ENCODE measurements at regions of chr10 and their contacts with region 1.

Region 1: GRCh38 chr10:22648547-22648961 is 65.8 kb downstream of the PIP4K2A start:
- DNase-seq: peak in 2 of 9 experiments; percentile 42 to 63
- ATAC-seq: no peak
- H3K4me3 ChIP-seq: peak overlapping the region; percentile 3 to 28
- H3K4me3 Mint-ChIP-seq: peak overlapping the region; percentile 81
- H3K27ac ChIP-seq: peak overlapping the region; percentile 17 to 74
- H3K27ac Mint-ChIP-seq: peak overlapping the region; percentile 91
- H3K4me1 ChIP-seq: peaks cover 98% of the 10 kb centered on the region
- H3K4me1 Mint-ChIP-seq: peaks cover 94% of the 10 kb centered on the region
- H3K27me3 ChIP-seq: no peaks in the 10 kb centered on the region
- H3K27me3 Mint-ChIP-seq: no peaks in the 10 kb centered on the region
- CTCF ChIP-seq: no peak

Region 2: GRCh38 chr10:22210277-22210676 is 438.3 kb before region 1 on chr10:
- CTCF ChIA-PET with region 1: no interaction called
- POLR2A ChIA-PET with region 1: no interaction called
- intact Hi-C with region 1: no loop called
- DNase-seq: no peak
- ATAC-seq: no peak
- H3K4me3 ChIP-seq: no peak overlapping the region
- H3K4me3 Mint-ChIP-seq: no peak overlapping the region
- H3K27ac ChIP-seq: no peak overlapping the region
- H3K27ac Mint-ChIP-seq: no peak overlapping the region
- H3K4me1 ChIP-seq: no peaks in the 10 kb centered on the region
- H3K4me1 Mint-ChIP-seq: no peaks in the 10 kb centered on the region
- H3K27me3 ChIP-seq: peaks cover 0 to 6% of the 10 kb centered on the region in 2 experiments
- H3K27me3 Mint-ChIP-seq: peaks cover 8% of the 10 kb centered on the region
- CTCF ChIP-seq: no peak

Region 3: GRCh38 chr10:22573820-22574569 is 74.6 kb before region 1 on chr10:
- CTCF ChIA-PET with region 1: interaction called, 4 read pairs
- POLR2A ChIA-PET with region 1: no interaction called
- intact Hi-C with region 1: loop called in 1 of 2 experiments (anchors 5 kb)
- DNase-seq: peak in 7 of 9 experiments; percentile 2 to 82 (median 43)
- ATAC-seq: peak; percentile 64
- H3K4me3 ChIP-seq: no peak overlapping the region
- H3K4me3 Mint-ChIP-seq: peak overlapping the region; percentile 71
- H3K27ac ChIP-seq: peak overlapping the region in 1 of 2 experiments; percentile 63
- H3K27ac Mint-ChIP-seq: peak overlapping the region; percentile 94
- H3K4me1 ChIP-seq: peaks cover 35% of the 10 kb centered on the region
- H3K4me1 Mint-ChIP-seq: peaks cover 73% of the 10 kb centered on the region
- H3K27me3 ChIP-seq: no peaks in the 10 kb centered on the region
- H3K27me3 Mint-ChIP-seq: no peaks in the 10 kb centered on the region
- CTCF ChIP-seq: peak; percentile 79

Region 4: DNA sequence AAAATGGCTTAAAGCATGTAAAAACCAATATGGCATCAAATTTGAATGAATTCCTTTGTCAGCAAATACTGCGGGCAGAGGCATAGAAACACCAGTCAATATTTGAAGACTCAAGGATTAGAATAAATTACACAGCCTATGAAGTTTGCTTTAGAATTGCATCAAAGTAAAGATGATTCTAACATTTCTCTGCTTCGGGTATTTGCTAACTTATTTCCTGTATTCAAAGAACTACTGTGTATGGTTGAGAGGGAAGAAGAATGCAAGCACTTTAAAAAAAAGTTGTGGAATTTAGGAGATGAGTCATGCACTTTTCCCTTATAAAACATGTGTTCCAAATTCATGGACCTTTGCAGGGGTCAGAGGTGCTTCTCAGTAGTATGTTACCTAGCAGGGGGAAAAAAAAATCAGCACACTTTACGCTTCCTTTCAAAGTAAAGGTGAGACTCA is 24.2 kb before region 1 on chr10:
- CTCF ChIA-PET with region 1: interaction called, 5 read pairs
- POLR2A ChIA-PET with region 1: interaction called, 10 read pairs
- intact Hi-C with region 1: loop called in 1 of 2 experiments (anchors 2 kb)
- DNase-seq: no peak
- ATAC-seq: peak; percentile 59
- H3K4me3 ChIP-seq: no peak overlapping the region
- H3K4me3 Mint-ChIP-seq: peak overlapping the region; percentile 50
- H3K27ac ChIP-seq: peak overlapping the region in 1 of 2 experiments; percentile 81
- H3K27ac Mint-ChIP-seq: peak overlapping the region; percentile 87
- H3K4me1 ChIP-seq: peaks cover 97% of the 10 kb centered on the region
- H3K4me1 Mint-ChIP-seq: peaks cover 97% of the 10 kb centered on the region
- H3K27me3 ChIP-seq: no peaks in the 10 kb centered on the region
- H3K27me3 Mint-ChIP-seq: no peaks in the 10 kb centered on the region
- CTCF ChIP-seq: no peak

Region 5: DNA sequence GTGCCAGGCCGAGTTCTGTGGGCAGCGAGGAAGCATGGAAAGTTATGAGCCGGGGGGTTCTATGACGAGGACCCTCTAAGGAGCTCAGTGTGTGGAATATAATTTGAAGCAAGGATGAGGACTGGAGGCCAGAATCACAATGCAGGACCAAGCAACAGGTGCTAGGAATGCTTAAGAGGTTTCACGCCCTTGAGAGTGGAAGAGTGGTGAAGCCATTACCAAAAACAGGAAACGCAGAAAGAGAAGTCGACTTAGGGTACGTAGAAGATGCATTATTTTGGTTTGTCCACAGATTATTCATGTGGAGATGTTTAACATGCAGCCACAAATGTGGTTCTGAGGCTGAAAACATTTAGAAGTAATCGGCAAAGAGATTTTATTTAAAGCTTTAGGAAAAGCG is 12.9 kb before region 1 on chr10:
- CTCF ChIA-PET with region 1: interaction called, 7 read pairs
- POLR2A ChIA-PET with region 1: interaction called, 13 read pairs
- intact Hi-C with region 1: loop called (anchors 1 to 2 kb)
- DNase-seq: peak in 2 of 9 experiments; percentile 35 to 62
- ATAC-seq: no peak
- H3K4me3 ChIP-seq: no peak overlapping the region
- H3K4me3 Mint-ChIP-seq: peak overlapping the region; percentile 26
- H3K27ac ChIP-seq: peak overlapping the region in 1 of 2 experiments; percentile 81
- H3K27ac Mint-ChIP-seq: peak overlapping the region; percentile 96
- H3K4me1 ChIP-seq: peaks cover 90% of the 10 kb centered on the region
- H3K4me1 Mint-ChIP-seq: peaks cover 96% of the 10 kb centered on the region
- H3K27me3 ChIP-seq: no peaks in the 10 kb centered on the region
- H3K27me3 Mint-ChIP-seq: no peaks in the 10 kb centered on the region
- CTCF ChIP-seq: no peak

Region 6: GRCh38 chr10:22682237-22683139 is 33.9 kb after region 1 on chr10:
- CTCF ChIA-PET with region 1: interaction called, 4 read pairs
- POLR2A ChIA-PET with region 1: interaction called, 6 read pairs
- intact Hi-C with region 1: loop called in 1 of 2 experiments (anchors 1 kb)
- DNase-seq: peak; percentile 31 to 89 (median 71)
- ATAC-seq: peak; percentile 51
- H3K4me3 ChIP-seq: peak overlapping the region; percentile 4 to 34
- H3K4me3 Mint-ChIP-seq: peak overlapping the region; percentile 68
- H3K27ac ChIP-seq: peak overlapping the region; percentile 75 to 85
- H3K27ac Mint-ChIP-seq: peak overlapping the region; percentile 98
- H3K4me1 ChIP-seq: peaks cover 97% of the 10 kb centered on the region
- H3K4me1 Mint-ChIP-seq: peaks cover 94% of the 10 kb centered on the region
- H3K27me3 ChIP-seq: no peaks in the 10 kb centered on the region
- H3K27me3 Mint-ChIP-seq: no peaks in the 10 kb centered on the region
- CTCF ChIP-seq: no peak

Region 7: DNA sequence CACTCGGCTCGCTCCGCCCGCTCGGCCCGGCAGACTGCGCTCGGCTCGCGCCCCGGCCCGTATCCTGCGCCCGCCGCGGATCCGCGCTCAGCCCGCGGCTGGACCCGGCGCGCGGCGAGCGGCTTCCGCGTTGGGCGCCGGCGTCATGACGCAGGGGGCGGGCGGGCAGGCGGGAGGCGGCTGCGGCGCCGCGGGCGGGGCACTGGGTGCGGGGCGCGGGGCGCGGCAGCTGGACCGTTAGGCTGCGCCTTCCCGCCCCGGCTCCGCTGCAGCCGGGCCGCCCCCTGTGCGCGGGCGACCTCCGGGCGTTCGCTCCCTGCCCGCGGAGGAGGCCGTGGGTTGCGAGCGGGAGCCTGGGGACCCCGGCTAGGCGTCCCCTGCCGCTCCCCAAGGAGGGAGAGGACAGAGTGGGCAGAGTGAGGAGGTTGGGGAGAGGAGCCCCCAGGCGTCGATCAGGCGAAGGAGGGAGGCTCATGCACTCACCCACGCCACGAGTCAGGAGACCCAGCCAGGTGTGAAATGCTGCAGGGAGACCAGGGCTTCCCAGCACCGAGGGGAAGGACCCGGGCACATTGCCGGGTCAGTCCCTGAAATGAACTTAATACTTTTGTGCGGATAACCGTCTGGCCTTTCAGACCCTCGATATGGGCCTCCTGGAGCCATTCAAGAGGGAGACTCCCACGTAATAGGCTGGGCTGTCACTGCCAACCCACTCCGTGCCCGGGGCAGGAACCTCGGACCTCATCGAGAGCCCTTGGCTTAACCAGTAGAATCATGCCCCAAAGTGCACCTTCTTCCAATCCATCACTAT is 66.1 kb after region 1 on chr10 and contains the start of gene PIP4K2A:
- CTCF ChIA-PET with region 1: interaction called, 10 read pairs
- POLR2A ChIA-PET with region 1: interaction called, 5 read pairs
- intact Hi-C with region 1: no loop called
- DNase-seq: peak; percentile 43 to 92 (median 75)
- ATAC-seq: peak; percentile 76
- H3K4me3 ChIP-seq: peak within 1 kb of the TSS; percentile 72 to 95
- H3K4me3 Mint-ChIP-seq: peak within 1 kb of the TSS; percentile 94
- H3K27ac ChIP-seq: peak within 1 kb of the TSS; percentile 78 to 81
- H3K27ac Mint-ChIP-seq: peak within 1 kb of the TSS; percentile 92
- H3K4me1 ChIP-seq: peaks cover 25% of the 10 kb centered on the region
- H3K4me1 Mint-ChIP-seq: peaks cover 30% of the 10 kb centered on the region
- H3K27me3 ChIP-seq: no peaks in the 10 kb centered on the region
- H3K27me3 Mint-ChIP-seq: no peaks in the 10 kb centered on the region
- CTCF ChIP-seq: no peak
- total RNA-seq, gene PIP4K2A: 82.5 to 89.5 TPM